Activated CD8-positive, alpha-beta memory T cell treated with anti-CD3 and anti-CD28 coated beads, Interleukin-2, amount 10 ng/mL, durations not matched to agents 7 days and 5 days (primary cell): ENCODE measurements at regions of chr17 and their contacts with region 1.

Region 1: GRCh38 chr17:20009302-20010098 is at the start of gene SPECC1:
- DNase-seq: peak; percentile 90
- ATAC-seq: peak; percentile 98
- H3K4me3 Mint-ChIP-seq: peak within 1 kb of the TSS; percentile 86
- H3K27ac Mint-ChIP-seq: peak within 1 kb of the TSS; percentile 75
- H3K4me1 Mint-ChIP-seq: peaks cover 14% of the 10 kb centered on the region
- H3K27me3 Mint-ChIP-seq: peaks cover 57% of the 10 kb centered on the region
- total RNA-seq, gene SPECC1: 11.4 to 17.6 TPM

Region 2: GRCh38 chr17:19897901-19898300 is 111.6 kb before region 1 on chr17:
- CTCF ChIA-PET with region 1: no interaction called
- DNase-seq: no peak
- ATAC-seq: no peak
- H3K4me3 Mint-ChIP-seq: no peak overlapping the region
- H3K27ac Mint-ChIP-seq: no peak overlapping the region
- H3K4me1 Mint-ChIP-seq: no peaks in the 10 kb centered on the region
- H3K27me3 Mint-ChIP-seq: no peaks in the 10 kb centered on the region

Region 3: GRCh38 chr17:19940722-19941464 is 68.6 kb before region 1 on chr17:
- CTCF ChIA-PET with region 1: no interaction called
- DNase-seq: no peak
- ATAC-seq: no peak
- H3K4me3 Mint-ChIP-seq: no peak overlapping the region
- H3K27ac Mint-ChIP-seq: no peak overlapping the region
- H3K4me1 Mint-ChIP-seq: peaks cover 13% of the 10 kb centered on the region
- H3K27me3 Mint-ChIP-seq: no peaks in the 10 kb centered on the region

Region 4: DNA sequence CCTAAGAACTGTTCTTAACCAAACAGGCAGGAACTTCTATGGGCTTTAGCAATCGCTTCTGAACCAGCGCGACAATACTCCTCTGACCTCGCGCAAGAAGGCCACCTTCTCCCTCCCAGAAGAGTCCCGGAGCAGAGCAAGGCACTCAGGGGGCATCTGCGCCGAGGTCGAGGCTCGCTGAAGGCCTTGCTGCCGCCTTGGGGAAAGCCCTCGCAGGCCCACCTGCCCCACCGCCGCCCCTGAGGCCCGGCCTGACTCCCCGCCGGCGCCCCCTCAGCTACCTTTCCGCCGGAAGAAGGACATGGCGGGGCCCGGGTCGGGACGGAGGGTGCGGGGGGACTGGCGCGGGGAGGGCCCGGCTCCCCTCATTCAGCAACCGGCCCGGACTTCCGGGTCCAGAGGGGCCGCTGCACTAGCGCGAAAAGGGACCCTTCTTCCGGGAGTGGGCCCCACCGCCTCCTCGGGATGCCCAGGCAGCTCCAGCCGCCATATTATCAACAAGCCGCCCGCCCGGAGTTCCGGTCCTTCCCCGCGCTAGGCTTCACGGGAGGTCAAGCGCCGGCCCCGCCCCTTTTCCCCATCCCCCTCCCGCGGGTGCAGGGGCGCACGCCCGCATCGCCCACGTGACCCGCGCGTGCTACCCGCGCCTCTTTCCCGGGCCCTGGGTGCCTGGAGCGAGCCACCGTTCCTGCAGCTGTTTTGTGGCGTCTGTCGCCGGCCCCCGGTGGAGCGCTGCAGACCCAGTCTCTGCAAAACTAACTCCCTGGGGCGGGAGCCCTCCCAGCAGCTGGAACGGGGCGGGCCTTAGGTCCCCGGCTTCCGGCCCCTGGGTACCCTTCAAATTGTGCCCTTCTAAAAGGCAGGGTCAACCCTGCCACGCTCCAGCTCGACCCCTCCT is 31.9 kb before region 1 on chr17 and contains the start of gene AKAP10:
- CTCF ChIA-PET with region 1: interaction called, 17 read pairs
- DNase-seq: peak; percentile 96
- ATAC-seq: peak; percentile 90
- H3K4me3 Mint-ChIP-seq: peak within 1 kb of the TSS; percentile 94
- H3K27ac Mint-ChIP-seq: peak within 1 kb of the TSS; percentile 98
- H3K4me1 Mint-ChIP-seq: peaks cover 48% of the 10 kb centered on the region
- H3K27me3 Mint-ChIP-seq: no peaks in the 10 kb centered on the region
- total RNA-seq, gene AKAP10: 34.3 to 44.6 TPM

Region 5: DNA sequence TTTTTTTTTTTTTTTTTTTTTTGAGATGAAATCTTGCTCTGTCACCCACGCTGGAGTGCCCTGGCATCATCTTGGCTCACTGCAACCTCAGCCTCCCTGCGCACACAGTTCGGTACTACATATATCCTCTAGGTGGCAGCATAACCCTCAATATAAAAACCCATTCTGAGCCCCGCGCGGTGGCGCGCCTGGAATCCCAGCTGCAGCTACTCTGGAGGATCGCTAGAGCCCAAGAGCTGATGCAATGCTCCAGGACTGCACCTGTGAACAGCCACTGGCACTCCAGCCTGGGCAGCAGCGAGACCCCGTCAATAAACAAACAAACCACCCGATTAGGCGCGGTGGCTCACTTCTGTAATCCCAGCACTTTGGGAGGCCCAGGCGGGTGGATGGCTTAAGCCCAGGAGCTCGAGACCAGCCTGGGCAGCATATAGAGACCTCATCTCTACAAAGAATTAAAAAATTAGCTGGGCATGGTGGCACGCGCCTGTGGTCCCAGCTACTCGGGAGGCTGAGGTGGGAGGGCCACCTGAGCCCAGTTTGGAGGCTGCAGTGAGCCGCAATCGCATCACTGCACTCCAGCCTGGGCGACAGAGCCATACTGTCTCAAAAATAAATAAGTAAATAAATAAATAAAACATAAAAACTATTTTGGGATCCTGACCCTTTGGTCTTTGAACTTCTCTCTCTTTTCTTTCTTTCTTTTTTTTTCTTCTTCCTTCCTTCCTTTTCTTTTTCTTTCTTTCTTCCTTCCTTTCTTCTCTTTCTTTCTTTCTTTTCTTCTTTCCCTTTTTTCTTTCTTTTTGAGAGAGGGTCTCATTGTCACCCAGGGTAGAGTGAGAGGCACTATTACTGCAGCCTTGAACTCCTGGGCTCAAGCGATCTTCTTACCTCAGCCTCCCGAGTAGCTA is 16.4 kb before region 1 on chr17:
- CTCF ChIA-PET with region 1: interaction called, 26 read pairs
- DNase-seq: peak; percentile 80
- ATAC-seq: peak; percentile 97
- H3K4me3 Mint-ChIP-seq: no peak overlapping the region
- H3K27ac Mint-ChIP-seq: no peak overlapping the region
- H3K4me1 Mint-ChIP-seq: peaks cover 7% of the 10 kb centered on the region
- H3K27me3 Mint-ChIP-seq: peaks cover 17% of the 10 kb centered on the region

Region 6: DNA sequence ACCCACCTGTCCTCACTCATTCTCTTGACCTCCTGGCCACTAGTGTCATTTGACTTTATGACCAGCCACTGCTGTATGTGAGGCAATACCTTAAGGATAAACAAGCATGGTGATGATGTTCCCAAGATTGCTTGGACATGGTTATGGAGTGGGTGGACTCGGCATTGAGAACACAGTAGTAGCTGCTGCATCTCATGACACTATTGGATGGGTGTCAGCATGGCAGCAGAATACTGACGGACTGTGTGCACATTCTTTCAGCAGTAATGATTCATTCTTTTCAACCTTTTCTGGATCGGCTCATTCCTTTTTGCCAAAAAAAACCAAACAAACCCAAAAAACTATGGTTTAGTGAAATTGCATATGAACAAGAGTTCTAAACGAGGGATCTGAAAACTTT is 13.2 kb after region 1 on chr17:
- CTCF ChIA-PET with region 1: interaction called, 11 read pairs
- DNase-seq: no peak
- ATAC-seq: no peak
- H3K4me3 Mint-ChIP-seq: no peak overlapping the region
- H3K27ac Mint-ChIP-seq: no peak overlapping the region
- H3K4me1 Mint-ChIP-seq: no peaks in the 10 kb centered on the region
- H3K27me3 Mint-ChIP-seq: no peaks in the 10 kb centered on the region

Region 7: GRCh38 chr17:20073055-20073979 is 63.8 kb after region 1 on chr17:
- CTCF ChIA-PET with region 1: interaction called, 18 read pairs
- DNase-seq: peak; percentile 79
- ATAC-seq: peak; percentile 96
- H3K4me3 Mint-ChIP-seq: peak overlapping the region; percentile 69
- H3K27ac Mint-ChIP-seq: peak overlapping the region; percentile 89
- H3K4me1 Mint-ChIP-seq: peaks cover 35% of the 10 kb centered on the region
- H3K27me3 Mint-ChIP-seq: no peaks in the 10 kb centered on the region

Region 8: DNA sequence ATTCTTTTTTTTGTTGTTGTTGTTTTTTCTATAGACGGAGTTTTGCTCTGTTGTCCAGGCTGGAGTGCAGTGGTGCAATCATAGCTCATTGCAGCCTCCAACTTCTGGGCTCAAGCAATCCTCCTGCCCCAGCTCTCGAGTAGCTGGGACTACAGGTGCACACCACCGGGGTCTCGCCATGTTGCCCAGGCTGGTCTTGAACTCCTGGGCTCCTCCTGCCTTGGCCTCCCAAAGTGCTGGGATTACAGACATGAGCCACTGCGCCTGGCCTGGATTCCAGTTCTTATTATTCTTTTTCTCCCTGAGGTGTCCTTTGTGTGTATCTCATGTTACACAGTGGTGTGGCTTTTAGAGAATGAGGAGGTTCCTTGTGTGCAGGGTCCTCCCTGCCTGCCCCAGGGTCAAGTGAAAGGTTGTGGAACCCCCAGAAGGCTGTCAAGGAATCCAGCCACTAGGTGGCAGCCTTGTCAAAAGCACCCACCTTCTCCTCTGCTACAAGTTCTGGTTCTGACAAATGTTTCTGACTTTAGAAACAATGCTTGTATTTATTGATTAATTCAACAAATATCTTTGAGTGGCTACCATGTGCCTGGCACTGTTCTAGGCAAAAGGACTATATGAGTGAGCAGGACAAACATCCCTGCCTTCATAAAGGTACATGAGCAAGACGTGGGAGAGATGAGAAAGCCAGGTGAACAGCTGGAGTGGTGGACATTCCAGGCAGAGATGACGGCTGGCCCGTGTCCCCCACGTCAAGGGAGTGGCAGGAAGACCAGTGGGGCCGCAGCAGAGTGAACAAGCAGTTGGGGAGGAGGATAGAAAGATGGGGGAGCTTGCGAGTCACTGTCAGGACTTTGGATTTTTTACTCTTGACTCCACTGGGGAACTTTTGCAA is 112.1 kb after region 1 on chr17:
- CTCF ChIA-PET with region 1: interaction called, 17 read pairs
- DNase-seq: peak; percentile 73
- ATAC-seq: peak; percentile 64
- H3K4me3 Mint-ChIP-seq: no peak overlapping the region
- H3K27ac Mint-ChIP-seq: no peak overlapping the region
- H3K4me1 Mint-ChIP-seq: peaks cover 2% of the 10 kb centered on the region
- H3K27me3 Mint-ChIP-seq: no peaks in the 10 kb centered on the region

Region 9: GRCh38 chr17:20159406-20160075 is 150.0 kb after region 1 on chr17:
- CTCF ChIA-PET with region 1: no interaction called
- DNase-seq: no peak
- ATAC-seq: no peak
- H3K4me3 Mint-ChIP-seq: no peak overlapping the region
- H3K27ac Mint-ChIP-seq: no peak overlapping the region
- H3K4me1 Mint-ChIP-seq: peaks cover 3% of the 10 kb centered on the region
- H3K27me3 Mint-ChIP-seq: peaks cover 18% of the 10 kb centered on the region